Activated CD8-positive, alpha-beta memory T cell treated with anti-CD3 and anti-CD28 coated beads, Interleukin-2, amount 10 ng/mL, durations not matched to agents 7 days and 5 days (primary cell): ENCODE measurements at regions of chr1 and their contacts with region 1.

Region 1: DNA sequence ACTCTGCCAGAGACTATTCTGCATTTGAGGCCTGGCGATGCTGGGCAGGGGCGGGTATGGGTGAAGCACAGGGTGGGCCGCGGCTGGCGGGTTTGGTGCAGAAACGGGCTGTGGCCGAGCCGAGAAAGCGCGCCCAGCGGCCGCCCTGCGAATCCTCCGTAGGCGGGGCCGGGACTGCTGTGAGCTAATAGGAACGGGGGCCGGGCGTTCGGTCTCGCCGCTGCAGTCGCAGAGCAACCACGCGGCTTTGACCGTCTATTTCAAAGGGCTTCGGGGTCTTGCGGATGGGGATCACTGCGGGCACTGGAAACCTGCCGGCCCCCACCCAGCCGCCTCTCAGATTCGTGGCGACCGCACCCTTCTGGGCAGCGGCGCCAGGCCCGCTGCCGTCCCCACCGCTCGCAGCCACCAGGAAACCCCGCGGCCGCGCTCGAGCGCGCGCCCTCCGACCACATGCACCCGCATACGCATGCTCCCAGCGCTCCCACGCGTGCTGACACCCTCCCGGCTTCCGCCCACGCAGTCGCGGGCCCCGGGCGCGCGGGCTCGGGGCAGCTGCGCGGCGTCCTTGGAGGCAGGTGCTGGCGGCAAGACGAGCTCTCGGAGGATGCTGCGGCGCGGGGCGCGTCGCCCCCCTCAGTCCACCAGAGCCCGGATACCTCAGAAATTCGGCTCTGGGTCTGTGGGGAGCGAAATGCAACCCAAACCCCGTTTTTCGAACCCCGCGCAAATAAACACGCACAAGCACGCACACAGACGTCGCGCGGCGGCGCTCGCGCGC is 32.6 kb downstream of the DNTTIP2 start:
- DNase-seq: peak; percentile 90
- ATAC-seq: peak; percentile 61
- H3K4me3 Mint-ChIP-seq: peak overlapping the region; percentile 88
- H3K27ac Mint-ChIP-seq: peak overlapping the region; percentile 93
- H3K4me1 Mint-ChIP-seq: peaks cover 19% of the 10 kb centered on the region
- H3K27me3 Mint-ChIP-seq: peaks cover 2% of the 10 kb centered on the region

Region 2: DNA sequence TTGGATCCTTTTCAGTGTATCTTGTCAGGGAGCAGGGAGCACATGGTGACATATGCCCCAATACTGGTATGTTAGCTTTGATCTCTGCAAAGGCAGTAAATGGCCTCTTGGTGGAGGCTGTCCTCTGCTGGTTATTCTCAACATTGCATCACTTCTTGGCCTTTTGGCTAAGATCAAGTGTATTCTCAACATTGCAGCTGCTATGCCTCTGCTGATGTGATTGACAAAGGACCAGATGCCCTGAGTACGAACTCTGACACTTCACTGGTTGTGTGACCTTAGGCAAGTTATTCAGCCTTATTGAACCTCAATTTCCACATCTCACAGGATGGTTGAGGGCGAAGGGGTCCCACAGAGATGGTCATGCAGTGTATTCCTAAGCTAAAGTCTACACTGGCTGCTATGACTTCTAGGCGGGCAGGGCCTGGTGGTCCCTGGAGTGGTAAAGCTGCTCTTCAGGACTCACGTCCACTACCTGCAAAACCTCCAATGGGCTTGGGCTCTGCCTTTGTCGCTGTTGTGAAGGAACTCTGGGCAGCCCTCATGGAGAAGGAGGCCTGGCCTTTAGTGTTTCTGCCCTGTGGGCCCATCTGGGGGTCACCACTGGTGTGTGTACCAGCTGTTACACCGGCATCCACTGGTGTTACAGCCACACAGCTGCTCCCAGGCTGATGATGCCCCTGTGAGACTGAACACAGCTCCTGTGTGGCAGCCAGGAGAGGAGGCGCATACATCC is 32.2 kb before region 1 on chr1:
- CTCF ChIA-PET with region 1: interaction called, 67 read pairs
- DNase-seq: peak; percentile 67
- ATAC-seq: peak; percentile 61
- H3K4me3 Mint-ChIP-seq: no peak overlapping the region
- H3K27ac Mint-ChIP-seq: no peak overlapping the region
- H3K4me1 Mint-ChIP-seq: peaks cover 22% of the 10 kb centered on the region
- H3K27me3 Mint-ChIP-seq: no peaks in the 10 kb centered on the region

Region 3: DNA sequence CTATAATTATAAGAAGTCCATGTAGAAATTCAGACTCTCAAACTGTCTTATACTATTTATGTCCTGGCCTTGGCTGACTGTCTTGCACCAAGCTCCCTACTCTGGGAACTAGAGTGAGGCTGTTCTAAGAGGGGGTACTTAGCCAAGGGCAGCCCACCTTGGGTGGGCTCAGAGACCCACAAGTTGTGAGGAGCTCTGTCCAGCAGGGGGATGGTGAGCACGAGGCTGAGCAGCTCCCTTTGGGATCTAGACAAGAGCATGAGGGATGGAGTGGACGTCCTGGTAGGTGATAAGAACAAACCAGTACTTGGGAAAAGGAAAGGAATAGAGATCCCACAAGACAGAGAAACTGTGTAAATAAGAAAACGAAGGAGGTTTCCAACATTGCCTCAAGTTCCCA is 846.6 kb after region 1 on chr1:
- CTCF ChIA-PET with region 1: no interaction called
- DNase-seq: no peak
- ATAC-seq: no peak
- H3K4me3 Mint-ChIP-seq: no peak overlapping the region
- H3K27ac Mint-ChIP-seq: no peak overlapping the region
- H3K4me1 Mint-ChIP-seq: peaks cover 5% of the 10 kb centered on the region
- H3K27me3 Mint-ChIP-seq: peaks cover 12% of the 10 kb centered on the region